ENCODE measurements at regions of chr3 and their contacts with region 1.

Region 1: DNA sequence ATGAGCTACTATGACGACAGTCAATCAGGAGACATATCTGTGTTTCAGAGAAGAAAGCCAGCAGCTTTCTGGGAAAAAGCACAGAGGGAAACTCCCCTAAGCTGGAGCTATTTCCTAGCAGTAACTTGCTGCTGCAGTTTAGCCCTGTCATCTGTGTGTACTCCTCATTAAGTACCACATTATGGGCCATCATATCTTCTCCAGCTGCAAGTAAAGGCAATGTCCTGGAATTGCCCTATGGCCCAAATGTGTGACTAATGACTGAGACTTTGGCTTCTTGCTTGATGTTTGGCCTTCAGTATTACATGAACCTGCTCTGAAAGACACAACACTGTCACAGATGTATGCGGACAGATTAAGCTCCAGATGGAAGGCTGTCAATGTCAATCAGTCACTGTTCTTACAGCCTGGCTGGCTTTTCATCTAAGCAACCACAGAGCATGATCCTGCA is 190.8 kb downstream of the FHIT start:
- DNase-seq: no peak
- H3K4me3 ChIP-seq: no peak overlapping the region
- H3K27ac ChIP-seq: no peak overlapping the region
- H3K4me1 ChIP-seq: no peaks in the 10 kb centered on the region
- H3K27me3 ChIP-seq: no peaks in the 10 kb centered on the region
- CTCF ChIP-seq: no peak

Region 2: GRCh38 chr3:60935709-60936108 is 124.7 kb before region 1 on chr3:
- CTCF ChIA-PET with region 1: no interaction called
- POLR2A ChIA-PET with region 1: no interaction called
- intact Hi-C with region 1: no loop called
- DNase-seq: no peak
- H3K4me3 ChIP-seq: no peak overlapping the region
- H3K27ac ChIP-seq: no peak overlapping the region
- H3K4me1 ChIP-seq: no peaks in the 10 kb centered on the region; the same call in 1 of the 2 replicates
- H3K27me3 ChIP-seq: no peaks in the 10 kb centered on the region
- CTCF ChIP-seq: no peak

Region 3: GRCh38 chr3:61438253-61439121 is 378.1 kb after region 1 on chr3:
- CTCF ChIA-PET with region 1: no interaction called
- POLR2A ChIA-PET with region 1: no interaction called
- intact Hi-C with region 1: no loop called
- DNase-seq: no peak
- H3K4me3 ChIP-seq: no peak overlapping the region
- H3K27ac ChIP-seq: no peak overlapping the region
- H3K4me1 ChIP-seq: no peaks in the 10 kb centered on the region
- H3K27me3 ChIP-seq: no peaks in the 10 kb centered on the region
- CTCF ChIP-seq: no peak

Region 4: GRCh38 chr3:62255758-62256157 is 1195.3 kb after region 1 on chr3:
- CTCF ChIA-PET with region 1: no interaction called
- POLR2A ChIA-PET with region 1: interaction called, 10 read pairs
- intact Hi-C with region 1: no loop called
- DNase-seq: no peak
- H3K4me3 ChIP-seq: no peak overlapping the region
- H3K27ac ChIP-seq: no peak overlapping the region
- H3K4me1 ChIP-seq: no peaks in the 10 kb centered on the region
- H3K27me3 ChIP-seq: no peaks in the 10 kb centered on the region
- CTCF ChIP-seq: no peak

Measured in PC-9 (cell line).